ENCODE measurements at regions of chr10 and their contacts with region 1.

Region 1: DNA sequence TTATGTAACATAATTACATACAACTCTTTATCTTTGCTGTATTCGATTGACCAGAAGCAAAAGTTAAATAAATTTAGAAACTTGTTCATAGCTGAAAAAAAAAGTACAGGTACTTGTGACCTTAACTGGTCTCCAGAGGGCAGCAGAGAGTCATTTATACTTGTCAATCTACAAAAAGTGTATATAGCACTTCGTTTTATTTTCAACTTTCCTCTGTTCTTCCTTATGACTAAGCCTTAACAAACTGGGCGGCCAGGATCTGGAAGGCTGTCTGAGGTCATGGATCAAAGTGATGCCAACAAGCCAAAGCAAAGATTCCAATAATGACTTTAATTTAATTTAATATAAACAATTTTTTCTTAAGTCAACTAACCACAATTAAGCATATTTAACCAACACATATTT is 29.8 kb downstream of the C10orf67 start:
- DNase-seq: no peak
- H3K4me3 ChIP-seq: no peak overlapping the region
- H3K27ac ChIP-seq: no peak overlapping the region
- H3K4me1 ChIP-seq: peaks cover 0 to 4% (median 0%) of the 10 kb centered on the region in 3 donors
- H3K27me3 ChIP-seq: no peaks in the 10 kb centered on the region
- CTCF ChIP-seq: peak; percentile 55 to 80 (median 72)
- POLR2A ChIP-seq: no peak

Region 2: GRCh38 chr10:23499372-23500132 is 184.7 kb after region 1 on chr10:
- intact Hi-C with region 1: no loop called
- DNase-seq: no peak
- H3K4me3 ChIP-seq: no peak overlapping the region
- H3K27ac ChIP-seq: no peak overlapping the region
- H3K4me1 ChIP-seq: peaks cover 0 to 18% (median 6%) of the 10 kb centered on the region in 3 donors
- H3K27me3 ChIP-seq: no peaks in the 10 kb centered on the region
- CTCF ChIP-seq: no peak
- POLR2A ChIP-seq: no peak

Region 3: DNA sequence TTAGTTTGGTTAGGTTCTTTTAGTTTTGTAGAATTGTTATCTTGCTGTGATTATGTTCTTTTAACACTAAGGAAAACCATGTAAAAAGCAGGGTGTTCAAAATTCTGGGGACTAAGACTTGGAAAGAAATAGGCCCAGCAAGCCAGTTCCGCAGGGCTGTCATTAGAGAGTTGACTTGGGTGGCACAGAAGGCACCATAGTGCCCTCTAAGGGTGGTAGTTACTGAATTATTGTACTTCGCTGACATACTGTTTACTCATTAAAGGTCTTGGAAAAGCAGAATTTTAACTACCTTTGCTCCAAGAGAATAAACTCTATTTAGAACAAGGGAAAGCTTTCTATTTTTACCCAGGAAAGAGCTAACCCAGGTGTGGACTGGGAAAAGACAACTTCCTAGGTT is 210.6 kb after region 1 on chr10:
- intact Hi-C with region 1: loop called (anchors 5 kb)
- DNase-seq: no peak
- H3K4me3 ChIP-seq: no peak overlapping the region
- H3K27ac ChIP-seq: no peak overlapping the region
- H3K4me1 ChIP-seq: peaks cover 0 to 1% (median 0%) of the 10 kb centered on the region in 3 donors
- H3K27me3 ChIP-seq: no peaks in the 10 kb centered on the region
- CTCF ChIP-seq: peak in 5 of 6 experiments; percentile 21 to 64 (median 47)
- POLR2A ChIP-seq: no peak

Region 4: GRCh38 chr10:23656735-23657134 is 341.9 kb after region 1 on chr10:
- intact Hi-C with region 1: loop called (anchors 10 kb)
- DNase-seq: no peak
- H3K4me3 ChIP-seq: no peak overlapping the region
- H3K27ac ChIP-seq: no peak overlapping the region
- H3K4me1 ChIP-seq: no peaks in the 10 kb centered on the region
- H3K27me3 ChIP-seq: no peaks in the 10 kb centered on the region
- CTCF ChIP-seq: peak in 5 of 6 experiments; percentile 31 to 77 (median 64)
- POLR2A ChIP-seq: no peak

Region 5: GRCh38 chr10:23702977-23703414 is 388.2 kb after region 1 on chr10:
- intact Hi-C with region 1: loop called (anchors 10 kb)
- DNase-seq: no peak
- H3K4me3 ChIP-seq: peak overlapping the region in 1 of 4 donors; percentile 26
- H3K27ac ChIP-seq: no peak overlapping the region
- H3K4me1 ChIP-seq: peaks cover 0 to 6% (median 0%) of the 10 kb centered on the region in 3 donors
- H3K27me3 ChIP-seq: peaks cover 0 to 28% (median 0%) of the 10 kb centered on the region in 4 donors
- CTCF ChIP-seq: peak; percentile 45 to 72 (median 70)
- POLR2A ChIP-seq: no peak